A673 (cell line): ENCODE measurements at regions of chr12 and their contacts with region 1.

Region 1: DNA sequence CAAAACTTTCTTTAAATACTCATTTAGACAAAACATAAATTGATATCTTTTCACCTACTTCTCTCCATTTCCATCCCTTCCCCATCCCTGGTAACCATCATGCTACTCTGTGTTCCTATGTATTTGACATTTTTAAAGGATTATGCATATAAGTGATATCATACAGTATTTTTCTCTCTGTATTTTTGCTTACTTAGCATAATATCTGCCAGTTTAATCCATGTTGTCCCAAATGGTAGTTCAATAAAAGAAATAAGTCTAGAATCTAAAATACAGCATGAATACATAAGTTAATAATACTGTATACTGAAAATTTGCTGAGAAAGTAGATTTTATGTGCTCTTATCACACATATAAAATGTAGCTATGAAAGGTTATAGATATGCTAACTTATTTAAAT is 190.3 kb upstream of the NAV3 start:
- DNase-seq: no peak
- H3K4me3 ChIP-seq: no peak overlapping the region
- H3K27ac ChIP-seq: no peak overlapping the region
- H3K4me1 ChIP-seq: no peaks in the 10 kb centered on the region
- H3K27me3 ChIP-seq: no peaks in the 10 kb centered on the region
- CTCF ChIP-seq: no peak

Region 2: GRCh38 chr12:77324763-77325468 is 315.4 kb before region 1 on chr12:
- CTCF ChIA-PET with region 1: no interaction called
- POLR2A ChIA-PET with region 1: no interaction called
- intact Hi-C with region 1: no loop called
- DNase-seq: peak; percentile 82
- H3K4me3 ChIP-seq: peak overlapping the region; percentile 49
- H3K27ac ChIP-seq: no peak overlapping the region
- H3K4me1 ChIP-seq: no peaks in the 10 kb centered on the region
- H3K27me3 ChIP-seq: peaks cover 58% of the 10 kb centered on the region
- CTCF ChIP-seq: peak; percentile 60

Region 3: GRCh38 chr12:77625441-77625840 is 14.9 kb before region 1 on chr12:
- CTCF ChIA-PET with region 1: no interaction called
- POLR2A ChIA-PET with region 1: no interaction called
- intact Hi-C with region 1: loop called (anchors 1 kb)
- DNase-seq: no peak
- H3K4me3 ChIP-seq: no peak overlapping the region
- H3K27ac ChIP-seq: no peak overlapping the region
- H3K4me1 ChIP-seq: no peaks in the 10 kb centered on the region
- H3K27me3 ChIP-seq: no peaks in the 10 kb centered on the region
- CTCF ChIP-seq: no peak